ENCODE measurements at regions of chr4 and their contacts with region 1.

Region 1: GRCh38 chr4:119212234-119212963 is at the start of gene USP53:
- DNase-seq: peak; percentile 94 to 99 (median 98)
- ATAC-seq: peak; percentile 94
- H3K4me3 ChIP-seq: peak within 1 kb of the TSS; percentile 74 to 89
- H3K4me3 Mint-ChIP-seq: peak within 1 kb of the TSS; percentile 91
- H3K27ac ChIP-seq: peak within 1 kb of the TSS; percentile 70 to 73
- H3K27ac Mint-ChIP-seq: peak within 1 kb of the TSS; percentile 95
- H3K4me1 ChIP-seq: peaks cover 8% of the 10 kb centered on the region
- H3K4me1 Mint-ChIP-seq: peaks cover 56% of the 10 kb centered on the region
- H3K27me3 ChIP-seq: no peaks in the 10 kb centered on the region
- H3K27me3 Mint-ChIP-seq: no peaks in the 10 kb centered on the region
- CTCF ChIP-seq: no peak
- total RNA-seq, gene USP53: 24.7 to 27.8 TPM

Region 2: GRCh38 chr4:119041951-119042560 is 170.3 kb before region 1 on chr4:
- CTCF ChIA-PET with region 1: interaction called, 35 read pairs
- POLR2A ChIA-PET with region 1: interaction called, 8 read pairs
- intact Hi-C with region 1: loop called in 1 of 2 experiments (anchors 2 kb)
- DNase-seq: peak; percentile 7 to 82 (median 53)
- ATAC-seq: peak; percentile 95
- H3K4me3 ChIP-seq: no peak overlapping the region
- H3K4me3 Mint-ChIP-seq: no peak overlapping the region
- H3K27ac ChIP-seq: no peak overlapping the region
- H3K27ac Mint-ChIP-seq: no peak overlapping the region
- H3K4me1 ChIP-seq: no peaks in the 10 kb centered on the region
- H3K4me1 Mint-ChIP-seq: peaks cover 2% of the 10 kb centered on the region
- H3K27me3 ChIP-seq: no peaks in the 10 kb centered on the region
- H3K27me3 Mint-ChIP-seq: no peaks in the 10 kb centered on the region
- CTCF ChIP-seq: peak; percentile 66

Region 3: GRCh38 chr4:119227690-119228089 is 15.3 kb after region 1 on chr4:
- CTCF ChIA-PET with region 1: interaction called, 6 read pairs
- POLR2A ChIA-PET with region 1: interaction called, 3 read pairs
- intact Hi-C with region 1: loop called in 1 of 2 experiments (anchors 2 kb)
- DNase-seq: no peak
- ATAC-seq: no peak
- H3K4me3 ChIP-seq: no peak overlapping the region
- H3K4me3 Mint-ChIP-seq: no peak overlapping the region
- H3K27ac ChIP-seq: no peak overlapping the region
- H3K27ac Mint-ChIP-seq: peak overlapping the region; percentile 6
- H3K4me1 ChIP-seq: peaks cover 3% of the 10 kb centered on the region
- H3K4me1 Mint-ChIP-seq: peaks cover 59% of the 10 kb centered on the region
- H3K27me3 ChIP-seq: no peaks in the 10 kb centered on the region
- H3K27me3 Mint-ChIP-seq: no peaks in the 10 kb centered on the region
- CTCF ChIP-seq: no peak

Region 4: GRCh38 chr4:119286377-119287002 is 74.1 kb after region 1 on chr4:
- CTCF ChIA-PET with region 1: no interaction called
- POLR2A ChIA-PET with region 1: no interaction called
- intact Hi-C with region 1: loop called (anchors 5 kb)
- DNase-seq: peak in 5 of 9 experiments; percentile 21 to 69 (median 34)
- ATAC-seq: peak; percentile 55
- H3K4me3 ChIP-seq: no peak overlapping the region
- H3K4me3 Mint-ChIP-seq: no peak overlapping the region
- H3K27ac ChIP-seq: no peak overlapping the region
- H3K27ac Mint-ChIP-seq: no peak overlapping the region
- H3K4me1 ChIP-seq: peaks cover 3% of the 10 kb centered on the region
- H3K4me1 Mint-ChIP-seq: peaks cover 30% of the 10 kb centered on the region
- H3K27me3 ChIP-seq: no peaks in the 10 kb centered on the region
- H3K27me3 Mint-ChIP-seq: no peaks in the 10 kb centered on the region
- CTCF ChIP-seq: peak; percentile 81

Region 5: GRCh38 chr4:119585771-119586170 is 373.4 kb after region 1 on chr4:
- CTCF ChIA-PET with region 1: no interaction called
- POLR2A ChIA-PET with region 1: no interaction called
- intact Hi-C with region 1: no loop called
- DNase-seq: no peak
- ATAC-seq: no peak
- H3K4me3 ChIP-seq: no peak overlapping the region
- H3K4me3 Mint-ChIP-seq: no peak overlapping the region
- H3K27ac ChIP-seq: no peak overlapping the region
- H3K27ac Mint-ChIP-seq: no peak overlapping the region
- H3K4me1 ChIP-seq: no peaks in the 10 kb centered on the region
- H3K4me1 Mint-ChIP-seq: no peaks in the 10 kb centered on the region
- H3K27me3 ChIP-seq: no peaks in the 10 kb centered on the region
- H3K27me3 Mint-ChIP-seq: peaks cover 8% of the 10 kb centered on the region
- CTCF ChIP-seq: no peak

Region 6: GRCh38 chr4:119628308-119629141 is 416.1 kb after region 1 on chr4 and contains the start of gene PDE5A:
- CTCF ChIA-PET with region 1: no interaction called
- POLR2A ChIA-PET with region 1: no interaction called
- intact Hi-C with region 1: loop called in 1 of 2 experiments (anchors 10 kb)
- DNase-seq: peak; percentile 52 to 85 (median 76)
- ATAC-seq: peak; percentile 76
- H3K4me3 ChIP-seq: peak within 1 kb of the TSS; percentile 73 to 78
- H3K4me3 Mint-ChIP-seq: peak within 1 kb of the TSS; percentile 88
- H3K27ac ChIP-seq: peak within 1 kb of the TSS in 1 of 2 experiments; percentile 50
- H3K27ac Mint-ChIP-seq: peak within 1 kb of the TSS; percentile 71
- H3K4me1 ChIP-seq: peaks cover 9% of the 10 kb centered on the region
- H3K4me1 Mint-ChIP-seq: peaks cover 23% of the 10 kb centered on the region
- H3K27me3 ChIP-seq: no peaks in the 10 kb centered on the region
- H3K27me3 Mint-ChIP-seq: peaks cover 7% of the 10 kb centered on the region
- CTCF ChIP-seq: peak; percentile 74
- total RNA-seq, gene PDE5A: 0.11 to 0.25 TPM